ENCODE measurements at regions of chr19 and their contacts with region 1.

Region 1: GRCh38 chr19:18596752-18597157 is 8.2 kb downstream of the REX1BD start:
- DNase-seq: peak; percentile 68
- ATAC-seq: peak in 1 of 2 donors; percentile 57

Region 2: GRCh38 chr19:18450931-18451845 is 145.6 kb before region 1 on chr19:
- intact Hi-C with region 1: no loop called
- DNase-seq: peak; percentile 87
- ATAC-seq: peak; percentile 77 to 87

Region 3: GRCh38 chr19:18496167-18496979 is 100.4 kb before region 1 on chr19:
- intact Hi-C with region 1: no loop called
- DNase-seq: no peak
- ATAC-seq: peak in 1 of 2 donors; percentile 23

Region 4: DNA sequence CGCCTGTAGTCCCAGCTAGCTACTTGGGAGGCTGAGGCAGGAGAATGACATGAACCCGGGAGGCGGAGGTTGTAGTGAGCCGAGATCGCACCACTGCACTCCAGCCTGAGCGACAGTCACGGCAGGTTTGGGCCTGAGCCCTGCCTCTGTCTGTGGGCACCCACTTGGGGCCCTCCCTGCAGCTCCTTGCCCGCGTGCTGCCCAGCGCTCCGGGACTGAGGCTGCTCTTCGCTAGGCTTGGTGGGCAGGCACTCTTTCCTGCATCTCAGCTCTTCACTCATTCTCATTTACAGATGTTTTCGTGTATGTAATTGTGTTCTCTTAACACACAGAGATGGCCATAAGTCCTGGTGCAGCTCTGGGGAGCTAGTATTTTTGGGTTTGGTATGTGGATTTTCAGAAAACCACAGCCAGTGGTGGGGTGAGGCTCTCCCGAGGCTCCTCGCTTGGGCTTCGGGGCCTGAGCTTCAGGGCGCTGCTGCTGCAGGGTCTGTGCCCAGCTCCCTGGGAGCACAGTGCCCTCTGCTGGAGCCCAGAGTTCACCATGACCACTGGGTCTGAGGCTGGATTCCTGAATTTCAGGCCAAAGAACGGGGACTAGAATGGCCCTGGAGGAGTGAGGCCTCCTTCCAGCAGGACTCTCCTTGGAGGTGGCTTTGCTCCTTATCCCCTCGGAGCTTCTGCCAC is 250.2 kb after region 1 on chr19:
- intact Hi-C with region 1: loop called (anchors 5 kb)
- DNase-seq: peak; percentile 84
- ATAC-seq: peak; percentile 80 to 86